Heart left ventricle (tissue), 16 donors: ENCODE measurements at regions of chr2 and their contacts with region 1.

Region 1: GRCh38 chr2:11124503-11125068 is 30.7 kb upstream of the SLC66A3 start:
- DNase-seq: peak in 2 of 5 donors; percentile 47 to 76
- ATAC-seq: peak in 3 of 4 donors; percentile 59 to 73 (median 61)
- H3K4me3 ChIP-seq: no peak overlapping the region
- H3K27ac ChIP-seq: no peak overlapping the region
- H3K4me1 ChIP-seq: peaks cover 0 to 10% (median 2%) of the 10 kb centered on the region in 12 donors
- H3K27me3 ChIP-seq: peaks cover 0 to 11% (median 0%) of the 10 kb centered on the region in 9 donors
- CTCF ChIP-seq: peak; percentile 51 to 78 (median 72)
- POLR2A ChIP-seq: no peak

Region 2: DNA sequence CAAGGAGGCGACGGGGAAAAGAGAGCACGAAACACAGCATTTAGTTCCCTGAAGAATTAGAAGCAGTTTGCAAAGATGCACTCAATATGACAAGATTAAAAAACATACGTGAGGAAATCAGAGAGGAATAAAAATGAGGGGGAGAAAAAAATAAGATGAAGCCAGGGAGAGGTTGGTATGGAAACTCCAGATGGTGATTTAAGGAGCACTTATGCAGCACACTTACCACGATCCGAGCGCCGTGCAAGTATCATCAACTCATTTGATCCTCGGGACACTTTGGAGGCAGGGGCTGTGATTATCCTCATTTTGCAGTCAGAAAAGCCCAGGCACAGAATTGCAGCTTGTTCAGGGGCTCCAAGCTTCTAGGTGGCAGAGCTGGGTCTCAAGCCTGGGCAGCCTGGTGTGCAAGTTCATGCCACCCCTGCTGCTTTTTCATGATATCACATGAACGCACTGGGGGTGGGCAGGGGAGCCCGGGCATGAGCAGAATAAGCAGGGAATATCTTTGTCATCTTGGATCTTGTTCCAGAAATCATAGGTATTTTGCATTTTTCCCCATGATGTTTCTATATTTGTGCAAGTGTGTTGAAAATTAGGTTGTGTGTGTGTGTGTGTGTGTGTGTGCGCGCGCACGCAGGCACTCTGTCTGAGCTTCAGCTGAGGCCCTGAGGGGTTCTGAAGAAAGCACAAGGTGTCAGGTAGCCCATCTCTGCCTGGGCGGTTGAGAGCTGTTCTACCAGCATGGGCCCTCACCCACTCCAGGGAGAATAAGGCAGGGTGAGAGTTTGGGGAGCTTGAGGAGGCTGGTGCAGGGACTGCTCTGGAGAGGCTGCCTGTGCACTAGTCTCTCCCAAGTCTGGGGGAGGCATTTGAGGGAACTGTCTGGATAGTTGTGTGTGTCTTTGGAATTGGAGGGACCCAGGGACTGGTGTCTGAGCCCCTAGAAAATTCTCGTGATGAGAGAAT is 287.0 kb before region 1 on chr2:
- intact Hi-C with region 1: loop called in 9 of 10 experiments (anchors 1 to 2 kb)
- DNase-seq: no peak
- ATAC-seq: no peak
- H3K4me3 ChIP-seq: no peak overlapping the region
- H3K27ac ChIP-seq: no peak overlapping the region
- H3K4me1 ChIP-seq: peaks cover 0 to 9% (median under 1%) of the 10 kb centered on the region in 12 donors
- H3K27me3 ChIP-seq: peaks cover 0 to 17% (median 0%) of the 10 kb centered on the region in 9 donors
- CTCF ChIP-seq: no peak
- POLR2A ChIP-seq: no peak

Region 3: GRCh38 chr2:10911261-10912075 is 213.1 kb before region 1 on chr2 and contains the start of gene KCNF1:
- intact Hi-C with region 1: loop called in 7 of 10 experiments (anchors 5 to 10 kb)
- DNase-seq: no peak
- ATAC-seq: peak in 2 of 4 donors; percentile 10 to 13
- H3K4me3 ChIP-seq: peak within 1 kb of the TSS in 11 of 12 donors; percentile 11 to 54 (median 40)
- H3K27ac ChIP-seq: no peak within 1 kb of the TSS
- H3K4me1 ChIP-seq: peaks cover 0 to 16% (median 0%) of the 10 kb centered on the region in 12 donors
- H3K27me3 ChIP-seq: peaks cover 6 to 50% (median 19%) of the 10 kb centered on the region in 9 donors
- CTCF ChIP-seq: peak in 3 of 12 donors; percentile 16 to 31 (median 20)
- POLR2A ChIP-seq: no peak
- total RNA-seq, gene KCNF1: 0.20 to 0.36 (median 0.28) TPM in 4 of 9 donors, not detected in the others

Region 4: GRCh38 chr2:11140492-11140891 is 15.9 kb after region 1 on chr2:
- intact Hi-C with region 1: no loop called
- DNase-seq: no peak
- ATAC-seq: no peak
- H3K4me3 ChIP-seq: no peak overlapping the region
- H3K27ac ChIP-seq: no peak overlapping the region
- H3K4me1 ChIP-seq: no peaks in the 10 kb centered on the region
- H3K27me3 ChIP-seq: no peaks in the 10 kb centered on the region
- CTCF ChIP-seq: no peak
- POLR2A ChIP-seq: no peak